MCF 10A (cell line): ENCODE measurements at regions of chr9 and their contacts with region 1.

Region 1: DNA sequence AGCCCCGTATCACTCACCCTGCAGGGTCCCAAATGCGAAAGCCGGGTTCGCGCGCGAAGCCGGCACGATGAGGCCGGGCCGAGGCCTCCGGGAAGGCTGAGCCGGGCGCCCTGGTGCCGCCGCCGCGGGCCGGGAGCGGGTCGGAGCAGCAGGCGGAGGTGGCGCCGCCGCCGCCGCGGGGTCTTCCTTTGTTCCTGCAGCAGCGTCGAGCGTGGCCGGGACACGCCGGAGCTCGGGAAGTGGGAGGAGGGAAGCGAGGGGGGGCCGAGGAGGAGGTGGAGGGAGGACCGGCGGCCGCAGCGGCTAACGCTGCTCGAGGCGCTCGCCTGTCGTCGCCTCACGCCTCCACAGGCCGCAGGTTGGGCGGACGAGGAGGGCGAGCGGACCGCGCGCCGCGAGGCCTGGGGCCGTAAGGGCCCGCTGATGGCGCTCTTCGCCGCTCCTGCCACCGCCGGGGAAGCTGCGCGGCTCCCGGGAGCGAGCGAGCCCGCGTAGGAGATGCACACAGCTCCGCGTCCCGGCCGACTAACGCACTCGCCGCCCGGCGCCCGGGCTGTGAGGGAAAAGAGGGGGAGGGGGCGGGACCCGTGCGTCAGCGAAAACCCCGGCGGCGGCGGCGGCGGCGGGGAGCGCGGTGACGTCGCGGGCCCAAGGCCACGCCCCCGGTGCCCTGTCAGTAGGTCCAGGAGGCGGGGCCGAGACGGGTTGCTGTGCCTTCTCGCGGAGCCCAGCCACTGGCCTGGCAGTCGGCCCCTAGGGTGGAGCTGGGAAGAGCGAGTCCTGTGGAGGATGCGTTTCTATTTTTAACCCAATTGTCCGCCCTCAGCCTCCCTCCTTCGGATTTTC is at the start of gene ZFAND5:
- DNase-seq: peak; percentile 98
- H3K4me3 Mint-ChIP-seq: peak within 1 kb of the TSS; percentile 78
- H3K27ac Mint-ChIP-seq: peak within 1 kb of the TSS; percentile 99
- H3K4me1 Mint-ChIP-seq: peaks cover 12% of the 10 kb centered on the region
- H3K27me3 Mint-ChIP-seq: no peaks in the 10 kb centered on the region
- CTCF ChIP-seq: no peak
- total RNA-seq, gene ZFAND5: 91.7 and 107 TPM in 2 replicates

Region 2: GRCh38 chr9:72038890-72039410 is 326.0 kb before region 1 on chr9:
- CTCF ChIA-PET with region 1: interaction called, 5 read pairs
- POLR2A ChIA-PET with region 1: no interaction called
- intact Hi-C with region 1: loop called (anchors 5 kb)
- DNase-seq: peak; percentile 85
- H3K4me3 Mint-ChIP-seq: no peak overlapping the region
- H3K27ac Mint-ChIP-seq: no peak overlapping the region
- H3K4me1 Mint-ChIP-seq: peaks cover 12% of the 10 kb centered on the region
- H3K27me3 Mint-ChIP-seq: no peaks in the 10 kb centered on the region
- CTCF ChIP-seq: peak; percentile 94

Region 3: DNA sequence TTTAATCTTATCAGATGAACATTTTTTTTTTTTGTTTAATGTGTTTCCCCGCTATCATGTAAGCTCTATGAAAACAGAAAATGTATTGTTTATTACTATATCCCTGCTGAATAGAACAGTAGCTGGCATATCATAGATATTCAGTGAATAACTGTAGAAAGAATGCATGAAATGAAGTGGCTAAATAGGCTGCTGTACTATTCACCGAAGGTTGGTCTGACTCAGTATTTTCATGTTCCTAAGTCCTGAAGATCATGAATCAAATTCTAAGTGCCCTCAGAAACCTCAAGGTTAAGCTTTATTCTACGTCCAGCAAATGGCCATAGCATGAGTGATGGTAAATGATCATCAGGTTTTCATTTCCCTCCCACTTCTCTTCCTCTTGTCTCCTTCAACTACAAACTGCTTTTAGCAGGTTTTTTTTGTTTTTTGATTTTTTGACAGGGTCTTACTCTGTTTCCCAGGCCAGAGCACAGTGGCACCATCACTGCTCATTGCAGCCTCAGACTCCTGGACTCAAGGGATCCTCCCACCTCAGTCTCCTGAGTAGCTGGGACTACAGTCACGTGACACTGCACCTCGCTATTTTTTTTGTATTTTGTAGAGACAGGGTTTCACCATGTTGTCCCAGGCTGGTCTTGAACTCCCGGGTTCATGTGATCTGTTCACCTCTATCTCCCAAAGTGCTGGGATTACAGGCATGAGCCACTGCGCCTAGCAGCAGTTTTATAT is 19.2 kb after region 1 on chr9:
- CTCF ChIA-PET with region 1: interaction called, 4 read pairs
- POLR2A ChIA-PET with region 1: interaction called, 19 read pairs
- intact Hi-C with region 1: no loop called
- DNase-seq: no peak
- H3K4me3 Mint-ChIP-seq: no peak overlapping the region
- H3K27ac Mint-ChIP-seq: no peak overlapping the region
- H3K4me1 Mint-ChIP-seq: peaks cover 12% of the 10 kb centered on the region
- H3K27me3 Mint-ChIP-seq: no peaks in the 10 kb centered on the region
- CTCF ChIP-seq: no peak

Region 4: GRCh38 chr9:72443855-72444254 is 79.0 kb after region 1 on chr9:
- CTCF ChIA-PET with region 1: interaction called, 6 read pairs
- POLR2A ChIA-PET with region 1: interaction called, 58 read pairs
- intact Hi-C with region 1: loop called (anchors 2 kb)
- DNase-seq: no peak
- H3K4me3 Mint-ChIP-seq: no peak overlapping the region
- H3K27ac Mint-ChIP-seq: peak overlapping the region; percentile 1
- H3K4me1 Mint-ChIP-seq: peaks cover 31% of the 10 kb centered on the region
- H3K27me3 Mint-ChIP-seq: no peaks in the 10 kb centered on the region
- CTCF ChIP-seq: no peak

Region 5: GRCh38 chr9:72526901-72527800 is 162.2 kb after region 1 on chr9:
- CTCF ChIA-PET with region 1: interaction called, 4 read pairs
- POLR2A ChIA-PET with region 1: interaction called, 80 read pairs
- intact Hi-C with region 1: loop called (anchors 1 kb)
- DNase-seq: peak; percentile 82
- H3K4me3 Mint-ChIP-seq: peak overlapping the region; percentile 65
- H3K27ac Mint-ChIP-seq: peak overlapping the region; percentile 96
- H3K4me1 Mint-ChIP-seq: peaks cover 16% of the 10 kb centered on the region
- H3K27me3 Mint-ChIP-seq: no peaks in the 10 kb centered on the region
- CTCF ChIP-seq: no peak

Region 6: DNA sequence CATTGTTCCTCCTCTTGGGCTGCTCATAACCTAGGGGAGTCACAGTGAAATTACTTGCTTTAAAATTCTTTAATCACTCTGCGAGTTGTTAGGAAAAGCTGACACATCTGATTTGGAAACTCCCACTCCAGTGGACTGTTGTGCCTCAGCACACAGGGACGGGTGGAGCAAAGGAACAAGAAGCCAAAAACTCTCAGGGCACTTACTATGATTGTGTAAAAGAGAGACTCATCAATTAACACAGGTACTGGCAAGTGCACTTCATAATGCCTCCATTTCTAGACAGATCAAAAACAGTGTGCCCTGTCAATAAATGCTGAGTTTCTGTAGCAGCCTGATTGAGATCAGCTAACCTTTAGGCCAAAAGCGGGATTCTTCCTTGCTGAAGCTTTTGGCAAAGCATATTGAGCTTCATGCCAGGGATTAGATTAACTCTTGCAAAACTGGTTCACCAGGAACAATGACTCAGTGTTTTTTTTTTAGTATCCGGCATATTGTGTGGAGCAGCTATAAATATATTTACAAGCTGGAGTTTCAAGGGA is 212.4 kb after region 1 on chr9:
- CTCF ChIA-PET with region 1: interaction called, 9 read pairs
- POLR2A ChIA-PET with region 1: interaction called, 176 read pairs
- intact Hi-C with region 1: loop called (anchors 2 kb)
- DNase-seq: peak; percentile 95
- H3K4me3 Mint-ChIP-seq: peak overlapping the region; percentile 15
- H3K27ac Mint-ChIP-seq: peak overlapping the region; percentile 53
- H3K4me1 Mint-ChIP-seq: peaks cover 36% of the 10 kb centered on the region
- H3K27me3 Mint-ChIP-seq: no peaks in the 10 kb centered on the region
- CTCF ChIP-seq: no peak

Region 7: DNA sequence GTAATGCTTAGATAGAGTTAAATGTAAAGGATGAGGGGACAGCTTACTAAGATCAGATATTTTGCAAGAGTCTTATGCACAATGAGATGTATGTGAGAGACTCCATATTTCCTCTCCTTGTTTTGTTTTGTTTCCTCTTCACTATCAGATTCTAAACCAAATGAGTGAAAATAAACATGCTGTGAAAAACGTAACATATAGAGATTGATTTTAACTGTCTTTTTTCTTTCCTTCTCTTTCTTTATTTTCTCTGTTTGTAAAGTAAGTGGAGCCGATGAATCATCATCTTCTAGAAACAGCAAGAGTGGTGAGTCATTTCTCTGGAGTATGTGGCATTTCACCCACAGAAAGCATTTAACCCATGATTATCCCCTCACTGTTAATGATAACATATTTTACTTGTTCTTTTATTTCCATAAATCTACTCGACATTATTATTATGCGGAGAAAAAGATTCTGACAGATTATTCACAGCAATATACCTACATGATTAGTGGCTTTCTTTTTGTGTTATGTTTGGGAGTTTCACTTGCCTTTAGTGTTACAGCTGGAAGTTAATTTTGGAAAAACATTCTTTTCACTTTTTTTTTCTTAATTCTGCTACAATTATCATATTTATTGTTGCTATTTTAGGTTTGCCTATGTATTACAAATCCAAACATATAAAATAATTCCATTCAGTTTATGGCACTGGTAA is 784.6 kb after region 1 on chr9:
- CTCF ChIA-PET with region 1: no interaction called
- POLR2A ChIA-PET with region 1: interaction called, 15 read pairs
- intact Hi-C with region 1: no loop called
- DNase-seq: peak; percentile 83
- H3K4me3 Mint-ChIP-seq: peak overlapping the region; percentile 56
- H3K27ac Mint-ChIP-seq: peak overlapping the region; percentile 86
- H3K4me1 Mint-ChIP-seq: peaks cover 40% of the 10 kb centered on the region
- H3K27me3 Mint-ChIP-seq: no peaks in the 10 kb centered on the region
- CTCF ChIP-seq: no peak